ENCODE measurements at regions of chr11 and their contacts with region 1.

Region 1: DNA sequence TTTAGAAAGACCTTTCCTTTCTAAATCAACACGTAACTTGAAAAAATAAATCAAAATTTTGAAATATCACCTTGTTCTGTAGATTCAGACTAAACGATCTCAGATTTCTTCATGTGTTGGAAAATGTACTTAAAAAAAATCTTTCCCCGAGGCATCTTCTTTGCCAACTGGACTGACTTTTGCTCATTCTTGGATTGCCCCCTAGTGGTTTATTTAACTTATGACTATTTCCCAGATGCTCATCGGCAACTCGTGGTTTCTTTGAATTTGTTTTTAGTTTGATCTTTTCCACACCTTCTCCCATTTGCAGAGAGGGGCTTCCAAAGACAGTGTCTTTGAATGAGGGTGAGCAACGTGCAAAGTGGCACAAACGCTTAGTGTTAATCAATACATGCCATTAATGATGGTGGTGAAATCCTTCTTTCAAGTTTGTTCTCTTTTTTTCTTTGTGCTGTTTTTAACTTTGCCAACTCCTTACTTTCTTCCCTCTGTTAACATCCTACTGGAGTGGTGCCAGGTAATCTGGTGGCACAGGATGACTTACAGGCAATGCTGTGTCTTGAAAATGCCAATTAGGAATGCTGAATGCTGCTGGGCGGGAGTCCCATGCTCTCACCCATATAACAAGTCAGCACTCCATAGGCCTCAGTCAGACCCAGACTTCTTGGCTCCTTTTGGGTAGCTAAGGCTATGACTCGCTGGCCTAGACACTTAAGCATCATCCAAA is 18.3 kb downstream of the PRSS23 start:
- DNase-seq: no peak
- H3K4me3 Mint-ChIP-seq: no peak overlapping the region
- H3K27ac Mint-ChIP-seq: no peak overlapping the region
- H3K4me1 Mint-ChIP-seq: peaks cover 2% of the 10 kb centered on the region
- H3K27me3 Mint-ChIP-seq: peaks cover 13% of the 10 kb centered on the region

Region 2: GRCh38 chr11:85595285-85595884 is 1223.2 kb before region 1 on chr11:
- CTCF ChIA-PET with region 1: no interaction called
- POLR2A ChIA-PET with region 1: no interaction called
- intact Hi-C with region 1: loop called (anchors 10 kb)
- DNase-seq: no peak
- H3K4me3 Mint-ChIP-seq: no peak overlapping the region
- H3K27ac Mint-ChIP-seq: no peak overlapping the region
- H3K4me1 Mint-ChIP-seq: no peaks in the 10 kb centered on the region
- H3K27me3 Mint-ChIP-seq: no peaks in the 10 kb centered on the region

Region 3: GRCh38 chr11:86608251-86608799 is 210.3 kb before region 1 on chr11:
- CTCF ChIA-PET with region 1: interaction called, 11 read pairs
- POLR2A ChIA-PET with region 1: no interaction called
- intact Hi-C with region 1: loop called (anchors 1 kb)
- DNase-seq: peak; percentile 59
- H3K4me3 Mint-ChIP-seq: no peak overlapping the region
- H3K27ac Mint-ChIP-seq: no peak overlapping the region
- H3K4me1 Mint-ChIP-seq: peaks cover 10% of the 10 kb centered on the region
- H3K27me3 Mint-ChIP-seq: peaks cover 2% of the 10 kb centered on the region

Region 4: GRCh38 chr11:86671682-86672621 is 146.7 kb before region 1 on chr11 and contains the start of gene ME3:
- CTCF ChIA-PET with region 1: interaction called, 3 read pairs
- POLR2A ChIA-PET with region 1: no interaction called
- intact Hi-C with region 1: loop called (anchors 1 kb)
- DNase-seq: peak; percentile 61
- H3K4me3 Mint-ChIP-seq: peak within 1 kb of the TSS; percentile 66
- H3K27ac Mint-ChIP-seq: no peak within 1 kb of the TSS
- H3K4me1 Mint-ChIP-seq: peaks cover 8% of the 10 kb centered on the region
- H3K27me3 Mint-ChIP-seq: peaks cover 23% of the 10 kb centered on the region
- total RNA-seq, gene ME3: 2.3 to 2.8 TPM